Endothelial cell of umbilical vein (primary cell): ENCODE measurements at regions of chr9 and their contacts with region 1.

Region 1: DNA sequence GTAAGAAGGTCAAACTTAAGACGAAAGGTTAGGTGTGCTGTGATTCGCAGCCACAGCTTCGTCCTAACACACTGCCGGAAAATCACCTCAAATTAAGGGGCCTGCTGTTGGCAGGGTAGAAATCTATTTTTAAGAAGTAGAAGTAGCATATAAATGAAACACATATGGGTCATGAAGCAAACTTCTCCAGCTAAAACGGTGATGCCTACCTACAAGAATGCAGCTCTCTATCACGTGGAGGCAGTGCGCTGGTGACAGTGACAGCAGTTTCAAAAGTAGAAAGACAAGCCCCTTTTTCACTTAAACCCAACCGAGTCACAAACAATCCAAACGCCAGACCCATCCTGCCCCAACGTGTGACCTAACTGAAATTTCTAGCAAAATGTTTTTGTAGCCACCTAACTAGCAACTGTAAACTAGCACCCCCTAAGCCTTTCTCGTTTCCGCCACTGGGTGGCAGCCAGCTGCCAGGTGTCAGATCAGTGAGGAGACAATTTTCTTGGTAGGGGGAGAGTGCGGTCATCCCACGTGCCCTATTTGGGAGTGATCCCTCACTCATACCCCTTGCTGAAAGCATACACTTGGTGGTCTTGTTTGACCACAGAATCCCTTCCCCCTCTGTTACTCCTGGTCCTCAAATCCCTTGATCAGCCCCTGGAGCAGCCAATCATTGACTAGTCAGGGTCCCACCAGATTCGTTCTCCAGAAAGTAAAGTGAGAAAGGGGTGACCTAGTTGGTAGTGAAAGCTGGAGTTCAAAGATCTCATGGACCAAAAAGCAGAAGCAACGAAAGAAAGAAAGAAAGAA is 71.8 kb upstream of the MAMDC2 start:
- DNase-seq: peak; percentile 66
- H3K4me3 ChIP-seq: no peak overlapping the region
- H3K27ac ChIP-seq: no peak overlapping the region
- H3K4me1 ChIP-seq: peaks cover 19% of the 10 kb centered on the region
- H3K27me3 ChIP-seq: no peaks in the 10 kb centered on the region
- CTCF ChIP-seq: peak; percentile 86 to 87
- POLR2A ChIP-seq: no peak

Region 2: DNA sequence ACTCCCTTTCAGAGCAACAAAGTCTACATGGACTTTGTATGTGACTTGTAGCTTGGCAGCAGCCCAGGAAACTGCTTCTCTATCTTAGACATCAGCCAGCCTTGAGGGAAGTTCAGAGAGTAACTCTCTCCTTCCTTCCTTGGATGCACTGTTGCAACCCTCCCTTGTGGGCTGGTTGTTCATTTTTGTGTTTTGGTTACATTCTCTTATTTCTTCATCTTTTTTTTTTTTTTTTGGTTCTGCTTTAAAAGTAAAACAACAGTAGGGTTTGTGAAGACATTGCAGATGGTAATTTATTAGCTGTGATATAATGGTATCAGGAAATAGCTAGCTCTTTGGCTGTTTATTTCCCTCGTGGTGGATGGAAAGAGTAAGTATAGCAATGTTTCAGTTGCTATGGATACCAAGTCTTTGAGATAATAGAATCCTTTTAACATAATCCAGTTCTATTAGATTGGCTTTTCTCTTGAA is 26.1 kb before region 1 on chr9:
- CTCF ChIA-PET with region 1: interaction called, 4 read pairs
- POLR2A ChIA-PET with region 1: interaction called, 3 read pairs
- dilution Hi-C with region 1: no loop called
- intact Hi-C with region 1: loop called (anchors 2 kb)
- DNase-seq: peak; percentile 62
- H3K4me3 ChIP-seq: no peak overlapping the region
- H3K27ac ChIP-seq: peak overlapping the region; percentile 90
- H3K4me1 ChIP-seq: peaks cover 22% of the 10 kb centered on the region
- H3K27me3 ChIP-seq: no peaks in the 10 kb centered on the region
- CTCF ChIP-seq: no peak
- POLR2A ChIP-seq: no peak

Region 3: GRCh38 chr9:70043689-70044489 is 72.0 kb after region 1 on chr9 and contains the start of gene MAMDC2:
- CTCF ChIA-PET with region 1: interaction called, 9 read pairs
- POLR2A ChIA-PET with region 1: no interaction called
- dilution Hi-C with region 1: no loop called
- intact Hi-C with region 1: loop called (anchors 2 kb)
- DNase-seq: peak; percentile 36
- H3K4me3 ChIP-seq: peak within 1 kb of the TSS; percentile 44 to 77 (median 54)
- H3K27ac ChIP-seq: no peak within 1 kb of the TSS
- H3K4me1 ChIP-seq: peaks cover 8% of the 10 kb centered on the region
- H3K27me3 ChIP-seq: no peaks in the 10 kb centered on the region
- CTCF ChIP-seq: no peak
- POLR2A ChIP-seq: no peak
- total RNA-seq, gene MAMDC2: 0.60 and 0.85 TPM in 2 replicates

Region 4: GRCh38 chr9:70258692-70259511 is 287.1 kb after region 1 on chr9 and contains the start of gene SMC5:
- CTCF ChIA-PET with region 1: interaction called, 3 read pairs
- POLR2A ChIA-PET with region 1: interaction called, 4 read pairs
- dilution Hi-C with region 1: no loop called
- intact Hi-C with region 1: loop called (anchors 2 kb)
- DNase-seq: peak; percentile 95
- H3K4me3 ChIP-seq: peak within 1 kb of the TSS; percentile 74 to 95 (median 87)
- H3K27ac ChIP-seq: peak within 1 kb of the TSS; percentile 93
- H3K4me1 ChIP-seq: peaks cover 40% of the 10 kb centered on the region
- H3K27me3 ChIP-seq: no peaks in the 10 kb centered on the region
- CTCF ChIP-seq: no peak
- POLR2A ChIP-seq: peak; percentile 95
- total RNA-seq, gene SMC5: 24.3 and 32.8 TPM in 2 replicates